ENCODE measurements at regions of chr1 and their contacts with region 1.

Region 1: DNA sequence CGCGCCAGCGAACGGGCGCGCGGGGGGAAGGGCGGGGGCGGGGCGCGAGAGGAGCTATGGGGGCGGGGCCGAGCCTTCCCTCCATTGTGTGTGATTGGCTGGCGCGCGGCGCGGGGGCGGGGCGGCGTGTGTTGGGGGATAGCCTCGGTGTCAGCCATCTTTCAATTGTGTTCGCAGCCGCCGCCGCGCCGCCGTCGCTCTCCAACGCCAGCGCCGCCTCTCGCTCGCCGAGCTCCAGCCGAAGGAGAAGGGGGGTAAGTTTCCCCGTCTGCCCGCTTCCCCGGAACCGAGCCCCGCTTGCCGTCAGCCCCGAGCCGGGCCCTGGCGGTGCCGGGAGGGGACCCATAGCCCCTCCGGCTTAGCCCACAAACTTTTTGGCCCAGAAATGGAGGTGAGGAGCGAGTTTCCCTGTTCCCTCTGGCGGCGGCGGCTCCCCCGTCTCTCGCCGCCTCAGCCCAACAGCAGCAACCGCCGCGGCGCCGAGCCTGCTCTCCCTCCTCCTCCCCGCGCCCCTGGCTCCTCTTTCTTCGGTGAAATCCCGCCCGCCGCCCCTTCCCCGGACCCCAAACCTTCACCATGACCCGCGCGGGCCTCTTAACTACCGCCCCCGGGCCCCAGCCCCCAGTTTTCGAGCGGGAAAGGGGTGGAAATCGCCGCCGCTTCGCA is at the start of gene H3-3A:
- DNase-seq: peak; percentile 97
- H3K4me3 Mint-ChIP-seq: peak within 1 kb of the TSS; percentile 100
- H3K27ac Mint-ChIP-seq: peak within 1 kb of the TSS; percentile 100
- H3K4me1 Mint-ChIP-seq: peaks cover 36% of the 10 kb centered on the region
- H3K27me3 Mint-ChIP-seq: no peaks in the 10 kb centered on the region
- total RNA-seq, gene H3-3A: 416 and 426 TPM in 2 replicates

Region 2: DNA sequence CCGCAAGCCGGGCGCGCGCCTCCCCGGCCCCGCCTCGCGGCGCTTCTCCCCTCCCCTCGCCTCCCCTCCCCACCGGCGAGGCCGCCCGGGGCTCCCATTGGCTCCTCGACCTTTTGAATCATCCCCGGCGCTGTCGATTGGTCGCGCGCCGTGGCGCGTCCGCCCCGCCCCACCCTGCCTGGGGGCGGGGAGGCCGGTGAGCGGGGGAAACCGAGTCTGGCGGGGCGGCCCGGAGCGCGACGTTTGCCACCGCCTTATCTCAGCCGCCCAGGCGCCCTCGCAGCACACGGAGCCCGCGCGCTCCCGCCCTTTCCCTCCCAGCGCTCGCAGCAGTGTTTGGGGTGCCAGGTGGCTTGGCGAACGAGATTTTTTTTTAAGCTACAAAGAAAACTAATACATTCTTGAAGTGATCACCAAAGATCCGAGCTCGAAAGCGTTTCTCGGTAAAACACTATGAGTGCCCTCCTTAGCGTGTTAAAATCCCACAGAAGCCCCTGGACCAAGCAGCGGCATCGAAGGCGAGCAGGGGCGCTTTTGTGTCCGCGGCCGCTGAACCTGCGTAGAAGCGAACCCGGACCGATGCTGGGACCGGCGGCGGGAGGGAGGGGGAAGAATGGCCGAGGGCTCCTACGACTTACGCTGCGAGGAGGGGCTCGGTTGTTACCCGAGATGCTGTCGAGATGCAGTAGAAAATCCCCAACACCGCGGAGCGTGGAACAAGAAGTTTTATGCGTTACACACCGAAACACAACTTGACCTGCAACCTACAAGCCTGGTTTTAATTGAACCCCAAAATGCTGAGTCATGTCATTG is 634.4 kb before region 1 on chr1:
- intact Hi-C with region 1: loop called (anchors 1 kb)
- DNase-seq: peak; percentile 94
- H3K4me3 Mint-ChIP-seq: peak overlapping the region; percentile 83
- H3K27ac Mint-ChIP-seq: peak overlapping the region; percentile 90
- H3K4me1 Mint-ChIP-seq: peaks cover 56% of the 10 kb centered on the region
- H3K27me3 Mint-ChIP-seq: no peaks in the 10 kb centered on the region

Region 3: GRCh38 chr1:225923692-225924555 is 138.8 kb before region 1 on chr1 and contains the start of gene PYCR2:
- intact Hi-C with region 1: loop called (anchors 1 kb)
- DNase-seq: peak; percentile 95
- H3K4me3 Mint-ChIP-seq: peak within 1 kb of the TSS; percentile 94
- H3K27ac Mint-ChIP-seq: peak within 1 kb of the TSS; percentile 91
- H3K4me1 Mint-ChIP-seq: peaks cover 43% of the 10 kb centered on the region
- H3K27me3 Mint-ChIP-seq: no peaks in the 10 kb centered on the region
- total RNA-seq, gene PYCR2: 137 and 145 TPM in 2 replicates

Region 4: GRCh38 chr1:226100436-226101391 is 38.0 kb after region 1 on chr1:
- intact Hi-C with region 1: loop called (anchors 2 kb)
- DNase-seq: no peak
- H3K4me3 Mint-ChIP-seq: peak overlapping the region; percentile 78
- H3K27ac Mint-ChIP-seq: no peak overlapping the region
- H3K4me1 Mint-ChIP-seq: peaks cover 16% of the 10 kb centered on the region
- H3K27me3 Mint-ChIP-seq: peaks cover 8% of the 10 kb centered on the region

Region 5: DNA sequence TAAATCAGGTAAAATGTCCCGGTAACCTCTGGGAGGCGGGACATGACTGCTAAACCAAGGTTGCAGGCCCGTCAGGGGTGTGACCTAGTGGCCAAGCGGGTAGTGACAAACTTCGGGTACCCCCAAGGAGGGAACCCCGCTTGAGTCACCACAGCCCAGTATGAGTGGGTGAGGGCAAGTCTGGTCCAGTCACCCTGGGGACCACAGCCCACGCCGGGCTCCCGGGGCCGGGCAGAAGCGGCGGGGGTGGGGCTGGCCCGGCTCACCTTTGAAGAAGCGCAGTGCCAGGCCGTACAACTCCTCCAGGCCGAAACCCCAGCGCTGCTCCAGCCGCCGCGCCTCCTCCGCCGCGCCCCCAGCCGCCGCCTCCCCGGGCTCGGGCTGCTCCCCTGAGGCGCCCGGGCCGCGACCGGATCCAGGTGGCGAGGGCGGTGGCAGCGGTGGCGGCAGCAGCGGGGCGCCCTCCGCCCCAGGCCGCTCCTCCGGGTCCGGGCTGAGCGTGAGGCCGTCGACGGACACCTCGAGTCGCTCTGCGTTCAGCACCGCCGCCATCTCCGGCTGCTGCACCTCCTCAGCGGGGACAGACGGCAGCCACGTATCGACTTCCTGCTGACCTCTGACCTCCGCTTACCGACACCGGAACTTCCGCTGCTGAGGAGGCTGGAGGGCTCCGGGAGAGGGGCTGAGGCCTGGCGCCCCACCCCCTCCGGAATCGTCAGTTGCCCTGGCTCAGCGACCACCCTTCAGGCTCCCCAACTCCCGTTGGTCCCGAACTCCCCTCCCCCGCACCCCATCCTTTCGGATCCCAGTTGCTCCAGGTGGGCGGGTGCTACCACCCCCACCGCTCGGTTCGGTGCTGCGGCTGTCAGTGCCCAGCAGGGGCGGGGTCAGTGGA is 123.7 kb after region 1 on chr1 and contains the start of gene ACBD3:
- intact Hi-C with region 1: loop called (anchors 1 kb)
- DNase-seq: peak; percentile 84
- H3K4me3 Mint-ChIP-seq: peak within 1 kb of the TSS; percentile 96
- H3K27ac Mint-ChIP-seq: peak within 1 kb of the TSS; percentile 92
- H3K4me1 Mint-ChIP-seq: peaks cover 35% of the 10 kb centered on the region
- H3K27me3 Mint-ChIP-seq: no peaks in the 10 kb centered on the region
- total RNA-seq, gene ACBD3: 23.6 and 26.0 TPM in 2 replicates

Region 6: DNA sequence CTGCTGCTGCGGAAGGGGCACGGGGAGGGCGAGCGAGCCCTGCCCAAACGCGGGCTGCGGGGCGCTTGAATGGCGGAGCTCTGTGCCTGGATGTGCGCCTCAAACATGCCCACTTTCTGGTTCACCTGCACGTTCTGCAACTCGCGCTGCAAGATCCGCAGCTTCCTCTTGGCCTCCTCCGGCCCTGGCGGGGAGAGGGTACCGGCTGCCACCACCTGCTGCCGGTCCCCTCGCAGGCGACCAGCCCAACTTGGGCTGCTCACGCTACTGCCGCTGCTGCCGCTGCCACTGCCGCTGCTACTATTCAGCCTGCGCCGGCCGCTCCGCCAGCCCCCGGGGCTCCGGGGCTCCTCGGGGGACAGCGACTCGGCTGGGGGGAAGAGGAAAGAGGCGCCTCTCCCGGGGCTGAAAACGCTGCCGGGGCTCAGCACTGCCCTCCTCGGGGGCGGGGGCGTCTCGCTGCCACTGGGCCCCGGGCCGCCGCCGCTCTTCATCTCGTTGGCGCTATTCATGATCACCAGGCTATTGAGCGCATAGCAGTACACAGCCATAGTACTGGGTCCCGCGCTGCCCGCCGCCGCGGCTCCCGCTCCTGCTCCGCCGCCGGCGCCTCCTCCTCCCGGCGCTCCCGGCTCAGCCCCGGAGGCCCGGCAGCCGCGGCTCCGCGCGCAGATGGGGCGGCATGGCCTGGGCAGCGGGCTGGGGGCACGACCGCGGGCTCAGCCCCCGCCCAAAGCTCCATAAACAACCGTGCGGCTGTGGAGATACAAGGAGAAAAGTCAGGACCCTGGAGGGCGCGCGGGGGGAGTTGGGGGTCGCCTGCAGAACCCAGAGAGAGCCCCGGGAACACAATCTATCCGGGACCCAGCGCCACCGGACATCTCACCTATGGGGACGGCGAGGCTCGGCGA is 674.5 kb after region 1 on chr1:
- intact Hi-C with region 1: loop called (anchors 10 kb)
- DNase-seq: peak; percentile 41
- H3K4me3 Mint-ChIP-seq: peak overlapping the region; percentile 90
- H3K27ac Mint-ChIP-seq: peak overlapping the region; percentile 86
- H3K4me1 Mint-ChIP-seq: peaks cover 50% of the 10 kb centered on the region
- H3K27me3 Mint-ChIP-seq: peaks cover 1% of the 10 kb centered on the region